ENCODE measurements at regions of chr19 and their contacts with region 1.

Region 1: GRCh38 chr19:506404-507285 is 652 bp upstream of the TPGS1 start:
- DNase-seq: peak; percentile 97
- ATAC-seq: peak; percentile 82
- H3K4me3 ChIP-seq: peak overlapping the region; percentile 89
- H3K27ac ChIP-seq: peak overlapping the region; percentile 99
- H3K4me1 ChIP-seq: peaks cover 17% of the 10 kb centered on the region
- H3K27me3 ChIP-seq: no peaks in the 10 kb centered on the region
- CTCF ChIP-seq: peak; percentile 97 to 99 (median 98)
- EP300 ChIP-seq: no peak
- POLR2A ChIP-seq: peak; percentile 76
- RAD21 ChIP-seq: peak; percentile 56

Region 2: GRCh38 chr19:488505-489417 is 17.9 kb before region 1 on chr19:
- CTCF ChIA-PET with region 1: interaction called, 12 read pairs
- POLR2A ChIA-PET with region 1: interaction called, 14 read pairs
- RAD21 ChIA-PET with region 1: interaction called, 8 read pairs
- SMC1A ChIA-PET with region 1: interaction called, 4 read pairs
- in situ Hi-C with region 1: no loop called
- intact Hi-C with region 1: no loop called
- DNase-seq: peak; percentile 59
- ATAC-seq: peak; percentile 98
- H3K4me3 ChIP-seq: peak overlapping the region; percentile 92
- H3K27ac ChIP-seq: peak overlapping the region; percentile 89
- H3K4me1 ChIP-seq: no peaks in the 10 kb centered on the region; the same call in 1 of the 2 replicates
- H3K27me3 ChIP-seq: no peaks in the 10 kb centered on the region
- CTCF ChIP-seq: no peak
- EP300 ChIP-seq: no peak
- POLR2A ChIP-seq: peak; percentile 94
- RAD21 ChIP-seq: no peak

Region 3: DNA sequence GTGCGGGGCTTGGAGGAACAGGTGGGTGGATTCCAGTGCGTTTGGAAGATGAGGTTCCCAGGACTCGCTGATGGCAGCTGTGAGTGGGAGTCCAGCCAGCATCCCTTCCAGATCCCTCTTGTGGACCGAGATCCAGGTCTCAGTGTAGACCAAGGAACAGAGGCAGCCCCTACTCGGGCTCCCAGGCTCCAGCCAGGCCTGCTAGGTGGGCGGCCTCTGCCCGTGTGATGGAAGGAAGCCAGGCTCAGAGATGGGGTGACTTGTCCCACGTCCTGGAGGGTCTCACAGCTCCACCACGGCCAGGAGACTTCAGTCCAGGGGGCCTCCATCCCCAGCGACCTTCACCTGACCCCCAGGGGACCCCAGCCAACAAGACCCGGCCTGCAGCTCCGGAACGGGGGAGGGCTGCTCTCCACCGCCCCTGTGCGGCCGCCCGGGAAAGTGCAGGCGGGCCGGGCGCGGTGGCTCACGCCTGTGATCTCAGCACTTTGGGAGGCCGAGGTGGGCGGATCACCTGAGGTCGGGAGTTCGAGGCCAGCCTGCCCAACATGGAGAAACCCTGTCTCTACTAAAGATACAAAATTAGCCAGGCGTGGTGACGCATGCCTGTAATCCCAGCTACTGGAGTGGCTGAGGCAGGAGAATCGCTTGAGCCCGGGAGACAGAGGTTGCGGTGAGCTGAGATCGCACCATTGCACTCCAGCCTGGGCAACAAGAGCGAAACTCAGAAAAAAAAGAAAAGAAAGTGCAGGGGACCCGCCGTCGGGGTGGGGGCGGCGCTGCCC is 11.1 kb before region 1 on chr19:
- CTCF ChIA-PET with region 1: interaction called, 12 read pairs
- POLR2A ChIA-PET with region 1: interaction called, 3 read pairs
- RAD21 ChIA-PET with region 1: interaction called, 5 read pairs
- SMC1A ChIA-PET with region 1: interaction called, 4 read pairs
- in situ Hi-C with region 1: no loop called
- intact Hi-C with region 1: no loop called
- DNase-seq: no peak
- ATAC-seq: peak; percentile 63
- H3K4me3 ChIP-seq: no peak overlapping the region
- H3K27ac ChIP-seq: no peak overlapping the region
- H3K4me1 ChIP-seq: no peaks in the 10 kb centered on the region
- H3K27me3 ChIP-seq: no peaks in the 10 kb centered on the region; a peak in 1 of 4 replicates
- CTCF ChIP-seq: peak; percentile 38 to 78 (median 66)
- EP300 ChIP-seq: no peak
- POLR2A ChIP-seq: no peak
- RAD21 ChIP-seq: peak; percentile 23; the same call in 1 of the 2 replicates

Region 4: DNA sequence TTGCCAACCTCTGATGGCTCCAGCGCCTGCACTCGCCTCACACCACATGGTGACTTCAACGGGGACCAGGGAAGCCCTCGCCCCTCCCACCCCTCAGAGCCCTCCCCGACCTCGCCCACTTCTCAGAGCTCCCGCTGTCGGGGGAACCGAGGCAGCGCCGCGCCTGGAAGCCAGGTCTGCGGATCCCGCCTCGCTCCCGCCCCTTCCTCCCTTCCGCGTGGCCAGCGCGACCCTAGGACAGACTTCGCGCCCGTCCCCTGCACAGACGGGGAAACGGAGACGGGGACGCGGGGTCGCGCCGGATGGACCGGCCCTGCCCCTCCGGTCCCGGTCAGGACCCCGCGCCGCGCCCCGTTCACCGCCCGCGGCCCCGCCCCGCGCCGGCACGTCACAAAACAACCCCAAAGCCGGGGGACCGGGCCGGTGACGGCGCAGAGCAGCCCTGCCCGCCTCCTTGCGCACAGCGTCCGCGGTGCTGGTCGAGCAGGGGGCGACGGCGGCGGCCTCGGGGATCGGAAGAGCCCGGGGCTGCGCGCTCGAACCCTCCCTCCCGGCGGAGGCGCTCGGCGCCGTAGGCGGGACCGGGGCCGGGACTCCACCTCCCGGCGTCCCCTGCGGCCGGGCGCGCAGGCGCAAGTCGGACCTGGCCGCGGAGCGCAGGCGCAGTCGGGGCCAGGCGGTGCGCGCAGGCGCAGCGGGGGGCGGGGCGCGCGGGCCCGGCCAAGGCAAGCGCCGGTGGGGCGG is 24.5 kb after region 1 on chr19:
- CTCF ChIA-PET with region 1: interaction called, 42 read pairs
- POLR2A ChIA-PET with region 1: interaction called, 13 read pairs
- RAD21 ChIA-PET with region 1: interaction called, 17 read pairs
- SMC1A ChIA-PET with region 1: interaction called, 14 read pairs
- in situ Hi-C with region 1: no loop called
- intact Hi-C with region 1: no loop called
- DNase-seq: no peak
- ATAC-seq: peak; percentile 78
- H3K4me3 ChIP-seq: peak overlapping the region; percentile 61
- H3K27ac ChIP-seq: peak overlapping the region; percentile 65
- H3K4me1 ChIP-seq: peaks cover 8% of the 10 kb centered on the region
- H3K27me3 ChIP-seq: no peaks in the 10 kb centered on the region
- CTCF ChIP-seq: 0 out of 6 replicates have a peak, but pooled peaks of 1 of the 3 experiments have one; percentile 7
- EP300 ChIP-seq: no peak
- POLR2A ChIP-seq: peak; percentile 67
- RAD21 ChIP-seq: no peak

Region 5: DNA sequence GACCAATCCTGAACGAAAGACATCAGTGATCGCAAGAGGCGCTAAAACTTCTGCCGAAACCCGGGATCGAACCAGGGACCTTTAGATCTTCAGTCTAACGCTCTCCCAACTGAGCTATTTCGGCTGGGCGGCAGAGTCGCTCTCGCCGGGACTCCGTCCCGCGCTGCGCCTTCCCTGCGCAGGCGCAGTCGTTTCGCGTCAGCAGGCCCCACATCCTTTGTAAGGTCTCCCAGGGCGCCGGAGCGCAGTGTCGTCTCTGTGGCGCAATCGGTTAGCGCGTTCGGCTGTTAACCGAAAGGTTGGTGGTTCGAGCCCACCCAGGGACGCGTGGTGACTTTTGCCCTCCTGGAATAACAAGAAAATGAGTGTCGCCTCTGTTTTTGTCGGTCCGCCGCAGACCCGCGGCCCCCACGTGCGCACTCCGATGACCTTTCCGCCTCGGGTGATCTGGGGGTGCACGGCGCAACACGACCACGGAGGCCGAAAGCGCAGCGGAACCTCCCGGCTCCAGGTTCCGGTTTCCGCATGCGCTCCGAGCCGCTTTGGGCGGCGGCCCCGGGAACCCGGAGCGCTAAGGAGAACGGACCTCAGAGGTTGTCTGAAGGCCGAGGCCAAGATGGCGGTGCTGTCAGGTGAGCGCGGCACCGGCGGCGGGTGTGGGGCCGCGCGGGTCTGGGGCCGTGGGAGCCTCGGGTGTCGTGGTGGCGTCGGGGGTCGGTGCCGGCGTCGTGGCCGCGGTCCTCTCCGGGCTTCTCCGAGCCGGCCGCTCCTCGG is 876.9 kb after region 1 on chr19 and contains the start of gene NDUFS7:
- CTCF ChIA-PET with region 1: no interaction called
- POLR2A ChIA-PET with region 1: no interaction called
- RAD21 ChIA-PET with region 1: no interaction called
- SMC1A ChIA-PET with region 1: no interaction called
- in situ Hi-C with region 1: no loop called
- intact Hi-C with region 1: no loop called
- DNase-seq: peak; percentile 70
- ATAC-seq: peak; percentile 95
- H3K4me3 ChIP-seq: peak within 1 kb of the TSS; percentile 94
- H3K27ac ChIP-seq: peak within 1 kb of the TSS; percentile 86
- H3K4me1 ChIP-seq: no peaks in the 10 kb centered on the region
- H3K27me3 ChIP-seq: no peaks in the 10 kb centered on the region
- CTCF ChIP-seq: 0 out of 6 replicates have a peak, but pooled peaks of 1 of the 3 experiments have one; percentile 23
- EP300 ChIP-seq: peak in 1 of 2 experiments; percentile 9; a peak in 1 of 4 replicates
- POLR2A ChIP-seq: peak; percentile 96
- RAD21 ChIP-seq: 0 out of 2 replicates have a peak, but pooled peaks have one; percentile 5
- polyA plus RNA-seq, gene NDUFS7: 10.6 to 39.4 TPM

Measured in GM12878 (cell line).